Right ventricle myocardium inferior (tissue), 1 donor: ENCODE measurements at regions of chr2 and their contacts with region 1.

Region 1: DNA sequence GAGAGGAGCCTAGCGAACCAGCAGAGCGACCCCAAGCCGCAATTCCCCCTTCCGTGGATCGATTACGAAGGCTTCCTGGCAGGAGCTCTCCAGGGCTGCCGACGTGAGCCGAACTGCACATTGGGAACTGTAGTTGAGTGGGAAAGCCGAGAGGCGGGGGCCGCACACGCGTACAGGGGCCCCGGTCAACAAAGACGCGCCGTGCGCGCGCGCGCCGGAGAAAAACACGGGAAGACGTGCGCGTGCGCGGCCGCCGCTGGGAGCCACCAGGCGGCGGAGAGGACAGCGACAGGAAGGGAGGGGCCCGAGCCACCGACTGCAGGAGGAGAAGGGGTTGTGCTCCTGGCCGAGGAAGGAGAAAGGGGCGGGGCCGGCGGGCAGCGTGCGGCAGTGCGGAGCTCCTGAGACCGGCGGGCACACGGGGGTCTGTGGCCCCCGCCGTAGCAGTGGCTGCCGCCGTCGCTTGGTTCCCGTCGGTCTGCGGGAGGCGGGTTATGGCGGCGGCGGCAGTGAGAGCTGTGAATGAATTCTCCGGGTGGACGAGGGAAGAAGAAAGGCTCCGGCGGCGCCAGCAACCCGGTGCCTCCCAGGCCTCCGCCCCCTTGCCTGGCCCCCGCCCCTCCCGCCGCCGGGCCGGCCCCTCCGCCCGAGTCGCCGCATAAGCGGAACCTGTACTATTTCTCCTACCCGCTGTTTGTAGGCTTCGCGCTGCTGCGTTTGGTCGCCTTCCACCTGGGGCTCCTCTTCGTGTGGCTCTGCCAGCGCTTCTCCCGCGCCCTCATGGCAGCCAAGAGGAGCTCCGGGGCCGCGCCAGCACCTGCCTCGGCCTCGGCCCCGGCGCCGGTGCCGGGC is at the start of gene SPAST:
- DNase-seq: peak; percentile 99
- ATAC-seq: peak; percentile 97
- total RNA-seq, gene SPAST: 9.9 TPM

Region 2: DNA sequence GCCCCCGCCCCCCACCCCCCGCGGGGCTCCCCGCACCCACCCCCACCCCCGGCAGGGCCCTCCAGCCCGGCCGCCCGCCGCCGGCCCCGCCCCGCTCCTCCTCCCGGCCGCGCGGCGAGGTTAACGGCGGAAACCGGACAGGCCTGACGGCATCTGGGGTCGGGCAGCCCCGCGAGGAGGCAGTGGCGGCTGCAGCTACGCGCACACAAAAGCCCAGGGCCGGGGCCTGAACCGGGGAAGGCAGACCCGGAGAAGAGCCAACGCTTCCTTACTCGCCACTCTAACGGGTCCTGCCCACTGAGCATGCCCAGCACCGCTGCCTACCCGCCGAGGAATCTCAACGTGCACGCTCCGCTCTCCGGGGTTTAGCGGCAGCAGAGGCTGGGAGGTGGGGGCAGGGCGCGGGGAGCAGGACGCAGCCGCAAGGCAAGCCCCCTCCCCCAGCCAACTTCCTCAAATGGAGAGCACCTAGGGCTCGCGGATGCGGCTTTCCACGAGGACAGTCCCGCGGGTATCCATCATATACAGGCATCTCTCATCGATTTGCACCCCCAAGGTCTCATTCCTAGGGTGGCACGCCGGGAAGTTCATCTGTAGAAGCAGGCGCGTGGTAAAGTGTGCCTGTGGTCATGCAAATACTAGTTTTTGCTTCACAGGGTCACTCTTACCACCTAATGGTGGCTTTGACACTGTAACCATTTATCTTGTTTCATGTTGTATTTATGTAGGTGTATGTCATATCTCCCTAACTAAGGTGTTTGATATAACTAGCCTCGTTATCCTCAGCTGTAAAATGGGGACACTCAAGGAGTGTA is 52.7 kb before region 1 on chr2 and contains the start of gene MEMO1:
- intact Hi-C with region 1: loop called (anchors 1 kb)
- DNase-seq: peak; percentile 97
- ATAC-seq: peak; percentile 88
- total RNA-seq, gene MEMO1: 50.0 TPM

Region 3: DNA sequence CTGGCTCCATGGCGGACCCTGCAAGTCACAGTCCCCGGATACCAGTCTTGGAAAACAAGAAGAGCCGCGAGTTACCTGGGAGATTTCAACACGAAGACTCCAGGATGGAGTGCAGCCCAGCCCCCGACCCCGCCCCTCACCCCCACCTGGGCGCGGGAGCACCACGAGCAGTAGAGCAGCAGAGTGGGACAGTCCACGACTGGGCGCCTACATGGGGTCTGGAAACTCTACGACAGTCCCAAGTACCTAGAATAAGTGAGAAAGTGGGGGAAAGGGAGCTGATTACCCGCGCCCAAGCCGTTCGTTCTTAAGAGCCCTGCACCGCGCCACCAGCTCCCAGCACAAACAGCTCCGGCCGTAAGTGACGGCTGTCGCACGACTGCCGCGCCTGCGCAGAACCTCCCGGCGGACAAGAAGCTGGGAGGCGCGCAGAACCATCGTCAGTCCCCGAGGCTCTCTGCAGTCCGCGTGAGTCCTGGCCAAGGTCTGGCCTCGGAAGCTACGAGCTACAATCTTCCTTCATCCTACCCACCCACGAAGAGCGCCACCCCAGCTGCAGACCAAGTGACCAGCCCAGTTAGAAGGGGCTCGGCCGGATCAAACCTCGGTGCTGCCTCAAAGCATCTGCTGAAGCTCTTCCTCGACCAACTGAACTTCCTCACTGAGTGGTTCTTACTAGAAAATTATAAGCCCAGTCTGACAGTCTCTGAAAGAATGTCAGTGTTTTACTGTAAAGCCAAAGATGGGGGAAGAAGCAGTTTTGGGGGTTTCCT is 23.9 kb before region 1 on chr2 and contains the start of gene DPY30:
- intact Hi-C with region 1: loop called (anchors 2 kb)
- DNase-seq: peak; percentile 98
- ATAC-seq: peak; percentile 98
- total RNA-seq, gene DPY30: 42.8 TPM

Region 4: GRCh38 chr2:32168513-32168912 is 105.0 kb after region 1 on chr2:
- intact Hi-C with region 1: loop called (anchors 10 kb)
- DNase-seq: no peak
- ATAC-seq: no peak